Esophagus muscularis mucosa (tissue), 4 donors: ENCODE measurements at regions of chr16 and their contacts with region 1.

Region 1: GRCh38 chr16:28553776-28554633 is at the start of gene SGF29:
- DNase-seq: peak; percentile 98
- H3K4me3 ChIP-seq: peak within 1 kb of the TSS; percentile 60 to 78 (median 66)
- H3K27ac ChIP-seq: peak within 1 kb of the TSS; percentile 92 to 98 (median 96)
- H3K4me1 ChIP-seq: peaks cover 10 to 30% (median 22%) of the 10 kb centered on the region in 4 donors
- H3K27me3 ChIP-seq: no peaks in the 10 kb centered on the region
- CTCF ChIP-seq: peak; percentile 19 to 43 (median 33)
- EP300 ChIP-seq: no peak
- POLR2A ChIP-seq: peak; percentile 93
- total RNA-seq, gene SGF29: 33.2 to 43.4 (median 39.9) TPM

Region 2: GRCh38 chr16:28491970-28492474 is 62.0 kb before region 1 on chr16 and contains the start of gene CLN3:
- intact Hi-C with region 1: loop called (anchors 2 kb)
- DNase-seq: peak; percentile 98
- H3K4me3 ChIP-seq: peak within 1 kb of the TSS; percentile 76 to 99 (median 98)
- H3K27ac ChIP-seq: peak within 1 kb of the TSS; percentile 92 to 95 (median 94)
- H3K4me1 ChIP-seq: peaks cover 8 to 27% (median 23%) of the 10 kb centered on the region in 4 donors
- H3K27me3 ChIP-seq: no peaks in the 10 kb centered on the region
- CTCF ChIP-seq: no peak
- EP300 ChIP-seq: no peak
- POLR2A ChIP-seq: no peak
- total RNA-seq, gene CLN3: 10.3 to 23.3 (median 16.6) TPM

Region 3: DNA sequence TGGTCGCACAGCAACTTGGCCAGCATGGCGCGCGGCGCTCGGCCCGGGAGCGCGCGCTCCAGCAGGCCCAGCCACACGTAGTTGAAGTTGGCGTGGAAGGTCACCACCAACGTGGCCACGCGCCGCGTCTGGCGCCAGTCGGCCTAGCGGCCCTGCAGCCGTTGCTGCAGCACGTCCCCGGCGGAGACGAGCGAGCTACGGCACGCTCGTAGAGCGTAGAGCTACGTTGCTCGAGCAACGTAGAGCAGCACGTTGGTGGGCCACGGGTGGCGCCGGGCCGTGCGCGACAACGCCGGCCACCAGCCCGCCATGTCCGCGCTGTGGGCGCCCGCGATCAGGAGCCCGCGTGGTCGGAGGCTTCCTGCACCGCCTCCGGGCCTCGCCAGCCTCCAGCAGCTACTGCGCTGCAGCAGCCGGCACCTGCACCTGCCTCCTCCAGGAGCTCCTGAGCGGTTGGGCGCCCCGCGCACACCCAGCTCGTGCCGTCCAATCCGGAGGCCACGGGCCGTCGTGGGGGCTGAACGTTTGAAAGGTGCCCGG is 69.2 kb after region 1 on chr16:
- intact Hi-C with region 1: no loop called
- DNase-seq: no peak
- H3K4me3 ChIP-seq: peak overlapping the region; percentile 52 to 60 (median 54)
- H3K27ac ChIP-seq: peak overlapping the region in 2 of 4 donors; percentile 51 to 62
- H3K4me1 ChIP-seq: peaks cover 3 to 14% (median 13%) of the 10 kb centered on the region in 4 donors
- H3K27me3 ChIP-seq: peaks cover 0 to 9% (median 0%) of the 10 kb centered on the region in 4 donors
- CTCF ChIP-seq: no peak
- EP300 ChIP-seq: no peak
- POLR2A ChIP-seq: no peak